Ovary (tissue), 10 donors: ENCODE measurements at regions of chr1 and their contacts with region 1.

Region 1: GRCh38 chr1:35192853-35193664 is at the start of gene SFPQ:
- DNase-seq: peak; percentile 96 to 99 (median 98)
- H3K4me3 ChIP-seq: peak within 1 kb of the TSS; percentile 91
- H3K27ac ChIP-seq: peak within 1 kb of the TSS; percentile 99
- H3K4me1 ChIP-seq: no peaks in the 10 kb centered on the region
- H3K27me3 ChIP-seq: no peaks in the 10 kb centered on the region
- CTCF ChIP-seq: no peak
- EP300 ChIP-seq: no peak
- POLR2A ChIP-seq: peak; percentile 96
- total RNA-seq, gene SFPQ: 205 to 295 (median 240) TPM

Region 2: DNA sequence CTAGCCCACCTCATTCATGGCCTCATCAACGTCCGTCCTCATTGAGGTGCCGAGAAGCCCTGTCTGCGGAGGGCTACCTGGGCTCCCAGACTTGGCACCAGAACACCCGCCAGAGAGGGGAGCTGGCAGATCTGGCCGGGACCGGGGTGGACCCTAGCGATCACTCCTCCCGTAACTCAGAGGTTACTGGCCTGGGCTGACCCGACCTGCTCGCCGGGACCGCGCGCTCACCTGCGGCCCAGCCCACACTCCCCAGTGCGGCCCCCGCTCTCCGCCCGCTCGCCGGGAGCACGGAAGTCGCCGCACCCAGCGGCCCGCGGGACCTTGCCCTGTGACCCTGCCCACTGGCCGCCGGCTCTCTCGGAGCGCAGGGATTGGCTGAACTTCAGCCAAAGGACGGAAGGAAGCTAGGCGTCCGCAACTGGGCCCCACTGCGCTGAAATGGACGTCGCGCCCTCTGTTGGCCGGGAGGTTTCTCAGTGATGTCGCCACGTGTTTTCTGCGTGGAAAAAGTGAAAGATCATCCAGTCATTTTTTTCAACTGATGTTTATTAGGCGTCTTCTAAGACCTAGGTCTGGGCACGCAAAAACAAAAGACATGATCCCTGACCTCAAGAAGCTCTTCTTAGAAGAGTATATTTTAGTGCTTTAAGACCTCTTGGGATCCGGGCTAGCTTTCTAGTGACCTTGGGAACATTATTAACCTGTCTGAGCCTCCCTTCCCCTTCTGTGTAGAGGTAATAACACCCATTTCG is 333.4 kb before region 1 on chr1 and contains the start of gene SMIM12:
- intact Hi-C with region 1: loop called in 1 of 4 experiments (anchors 10 kb)
- DNase-seq: peak; percentile 91 to 94 (median 93)
- H3K4me3 ChIP-seq: peak within 1 kb of the TSS; percentile 92
- H3K27ac ChIP-seq: peak within 1 kb of the TSS; percentile 11 to 67
- H3K4me1 ChIP-seq: peaks cover 8% of the 10 kb centered on the region
- H3K27me3 ChIP-seq: no peaks in the 10 kb centered on the region
- CTCF ChIP-seq: peak; percentile 84 to 89 (median 86)
- EP300 ChIP-seq: peak; percentile 26
- POLR2A ChIP-seq: peak; percentile 80
- total RNA-seq, gene SMIM12: 15.4 to 32.3 (median 24.4) TPM

Region 3: GRCh38 chr1:35030756-35031446 is 162.2 kb before region 1 on chr1:
- intact Hi-C with region 1: loop called in 1 of 4 experiments (anchors 5 kb)
- DNase-seq: peak; percentile 30 to 57 (median 36)
- H3K4me3 ChIP-seq: peak overlapping the region; percentile 70
- H3K27ac ChIP-seq: peak overlapping the region; percentile 77 to 89
- H3K4me1 ChIP-seq: peaks cover 8% of the 10 kb centered on the region
- H3K27me3 ChIP-seq: no peaks in the 10 kb centered on the region
- CTCF ChIP-seq: no peak
- EP300 ChIP-seq: no peak
- POLR2A ChIP-seq: no peak

Region 4: DNA sequence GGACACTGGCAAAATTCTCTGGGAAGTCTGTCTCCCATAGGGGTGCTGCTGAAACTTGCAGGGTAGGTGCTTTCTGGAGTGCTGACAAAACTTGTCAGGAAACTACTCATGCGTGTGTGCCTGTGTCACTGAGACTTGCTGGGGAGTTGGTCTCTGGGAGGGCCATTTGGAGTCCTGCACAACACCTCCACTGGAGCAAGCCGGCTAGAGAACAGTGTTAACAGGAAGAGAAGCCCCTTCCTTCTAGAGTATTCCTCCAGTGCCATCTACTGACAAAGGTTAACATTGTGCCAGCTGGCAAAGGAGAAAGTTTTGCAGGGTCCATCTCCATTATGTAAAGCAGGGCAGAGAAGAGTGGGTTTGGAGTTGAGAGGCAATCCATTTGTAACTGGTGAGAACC is 105.4 kb after region 1 on chr1:
- intact Hi-C with region 1: loop called in 1 of 4 experiments (anchors 10 kb)
- DNase-seq: peak in 2 of 5 donors; percentile 15 to 31
- H3K4me3 ChIP-seq: no peak overlapping the region
- H3K27ac ChIP-seq: no peak overlapping the region
- H3K4me1 ChIP-seq: peaks cover 1% of the 10 kb centered on the region
- H3K27me3 ChIP-seq: no peaks in the 10 kb centered on the region
- CTCF ChIP-seq: peak; percentile 21 to 30 (median 23)
- EP300 ChIP-seq: no peak
- POLR2A ChIP-seq: no peak

Region 5: DNA sequence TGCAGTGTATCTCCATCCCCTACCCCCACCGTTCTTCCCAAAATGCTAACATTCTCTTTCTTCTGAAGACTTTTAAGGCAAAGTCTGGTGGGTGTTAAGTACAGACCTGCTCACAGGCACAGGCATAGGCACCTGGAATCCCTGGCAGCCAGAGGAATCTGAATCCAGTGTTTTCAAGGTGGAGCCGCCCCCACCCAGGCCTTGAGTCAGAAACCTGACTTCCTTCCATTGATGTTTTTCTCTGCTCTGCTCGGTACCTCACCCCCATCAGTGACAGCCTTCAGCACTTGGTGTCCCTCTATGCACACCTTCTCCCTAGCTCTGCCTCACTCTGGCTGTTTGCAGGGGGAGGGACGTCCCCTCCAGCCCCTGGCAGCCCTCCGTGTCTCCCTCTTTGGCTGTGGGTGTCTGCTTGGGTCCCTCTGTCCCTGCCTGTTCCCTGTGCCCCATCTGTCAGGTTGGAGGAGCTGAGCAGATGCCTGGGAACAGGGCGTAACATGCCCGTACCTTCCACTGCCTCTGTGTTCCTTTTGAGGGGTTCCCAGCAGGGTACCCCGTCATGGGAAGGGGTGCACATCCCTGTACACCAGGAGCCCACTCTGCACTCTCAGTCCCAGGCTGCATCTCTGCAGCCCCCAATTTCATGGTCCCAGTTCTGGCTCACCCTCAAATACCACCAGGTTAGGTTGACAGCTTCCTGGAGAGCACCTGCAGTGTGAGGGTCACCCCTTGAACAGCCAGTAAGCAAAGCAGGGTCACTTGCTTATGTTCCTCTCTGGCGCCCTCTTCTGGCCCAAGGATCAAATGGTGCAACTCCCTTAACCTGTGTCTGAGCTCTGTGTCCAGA is 371.2 kb after region 1 on chr1:
- intact Hi-C with region 1: loop called in 1 of 4 experiments (anchors 10 kb)
- DNase-seq: peak; percentile 72 to 85 (median 82)
- H3K4me3 ChIP-seq: no peak overlapping the region
- H3K27ac ChIP-seq: no peak overlapping the region
- H3K4me1 ChIP-seq: peaks cover 4% of the 10 kb centered on the region
- H3K27me3 ChIP-seq: no peaks in the 10 kb centered on the region
- CTCF ChIP-seq: peak; percentile 30 to 63 (median 58)
- EP300 ChIP-seq: no peak
- POLR2A ChIP-seq: no peak